Activated CD4-positive, alpha-beta T cell treated with anti-CD3 and anti-CD28 coated beads for 36 hours (primary cell): ENCODE measurements at regions of chr11 and their contacts with region 1.

Region 1: GRCh38 chr11:848380-848931 is 5.8 kb downstream of the TSPAN4 start:
- DNase-seq: peak; percentile 81
- ATAC-seq: peak; percentile 68
- H3K4me3 Mint-ChIP-seq: peak overlapping the region; percentile 62
- H3K27ac Mint-ChIP-seq: no peak overlapping the region
- H3K4me1 Mint-ChIP-seq: peaks cover 13% of the 10 kb centered on the region
- H3K27me3 Mint-ChIP-seq: peaks cover 2% of the 10 kb centered on the region

Region 2: DNA sequence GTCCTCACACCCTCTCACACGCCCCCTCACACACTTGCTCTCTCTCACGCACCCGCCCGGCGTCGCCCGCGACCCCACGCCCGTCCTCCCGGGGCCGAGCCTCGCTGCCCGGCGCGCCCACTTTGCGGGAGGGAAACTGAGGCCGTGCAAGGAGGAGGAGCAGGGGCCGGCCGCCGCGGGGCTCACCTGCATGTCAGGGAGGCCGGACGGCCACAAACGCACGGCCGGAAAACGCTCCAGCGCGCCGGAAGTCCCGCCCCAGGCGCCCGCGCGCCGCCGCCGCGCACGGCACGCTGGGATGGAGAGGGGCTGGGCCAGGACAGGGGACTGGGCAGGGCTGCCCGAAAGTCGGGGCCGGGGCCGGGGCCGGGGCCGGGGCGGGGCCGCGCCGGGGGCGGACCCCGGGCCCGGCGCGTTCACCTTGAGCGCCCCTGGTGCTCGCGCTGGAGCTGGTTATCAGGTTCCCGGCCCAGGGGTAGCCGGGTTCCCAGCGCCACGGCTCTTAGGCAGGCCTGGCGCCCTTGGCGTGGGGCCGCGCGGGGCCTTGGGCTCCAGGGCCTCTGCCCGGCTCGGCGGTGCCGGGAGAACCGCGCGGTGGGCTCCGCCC is 62.2 kb after region 1 on chr11 and contains the start of gene CHID1:
- CTCF ChIA-PET with region 1: no interaction called
- POLR2A ChIA-PET with region 1: no interaction called
- intact Hi-C with region 1: loop called (anchors 1 to 5 kb)
- DNase-seq: peak; percentile 92
- ATAC-seq: peak; percentile 98
- H3K4me3 Mint-ChIP-seq: peak within 1 kb of the TSS; percentile 88
- H3K27ac Mint-ChIP-seq: peak within 1 kb of the TSS; percentile 88
- H3K4me1 Mint-ChIP-seq: peaks cover 24% of the 10 kb centered on the region
- H3K27me3 Mint-ChIP-seq: no peaks in the 10 kb centered on the region
- total RNA-seq, gene CHID1: 60.4 to 75.3 TPM

Region 3: DNA sequence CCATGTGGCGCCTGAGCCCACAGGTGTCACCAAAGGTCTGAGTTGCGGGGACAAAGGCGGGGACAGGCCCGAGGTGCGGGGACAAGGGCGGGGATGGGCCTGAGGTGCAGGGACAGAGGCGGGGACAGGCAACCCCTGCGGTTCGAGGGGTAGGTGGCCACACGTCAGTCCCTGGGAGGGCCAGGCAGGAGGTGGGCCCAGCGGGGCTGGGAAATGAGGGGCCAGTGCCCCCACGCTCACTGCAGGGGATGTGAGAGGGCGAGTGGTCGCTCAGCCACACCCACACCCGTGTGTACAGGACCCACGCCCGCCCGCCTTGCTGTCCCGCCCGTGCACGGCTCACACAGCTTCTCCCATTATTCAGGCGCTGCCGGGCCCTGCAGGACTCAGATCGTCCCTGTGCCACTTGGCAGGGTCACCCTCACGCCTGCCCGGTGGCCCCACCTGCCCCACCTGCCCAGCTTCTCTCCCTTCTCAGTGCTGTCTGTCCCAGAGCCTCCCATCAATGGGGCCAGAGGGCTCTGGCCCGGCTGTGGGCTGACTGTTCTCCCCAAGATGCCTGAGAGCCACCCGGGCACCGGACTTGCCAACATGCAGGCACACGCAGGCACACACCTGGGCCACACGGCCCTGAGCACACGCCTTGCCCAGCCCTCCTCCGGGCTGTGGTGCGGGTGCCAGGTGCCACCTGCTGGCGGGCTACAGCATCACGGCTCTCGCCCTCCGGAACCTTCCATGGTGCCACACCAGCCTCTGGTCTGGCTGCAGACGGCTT is 202.3 kb after region 1 on chr11:
- CTCF ChIA-PET with region 1: interaction called, 4 read pairs
- POLR2A ChIA-PET with region 1: no interaction called
- intact Hi-C with region 1: loop called (anchors 1 kb)
- DNase-seq: peak; percentile 79
- ATAC-seq: peak; percentile 96
- H3K4me3 Mint-ChIP-seq: no peak overlapping the region
- H3K27ac Mint-ChIP-seq: no peak overlapping the region
- H3K4me1 Mint-ChIP-seq: no peaks in the 10 kb centered on the region
- H3K27me3 Mint-ChIP-seq: peaks cover 4% of the 10 kb centered on the region

Region 4: DNA sequence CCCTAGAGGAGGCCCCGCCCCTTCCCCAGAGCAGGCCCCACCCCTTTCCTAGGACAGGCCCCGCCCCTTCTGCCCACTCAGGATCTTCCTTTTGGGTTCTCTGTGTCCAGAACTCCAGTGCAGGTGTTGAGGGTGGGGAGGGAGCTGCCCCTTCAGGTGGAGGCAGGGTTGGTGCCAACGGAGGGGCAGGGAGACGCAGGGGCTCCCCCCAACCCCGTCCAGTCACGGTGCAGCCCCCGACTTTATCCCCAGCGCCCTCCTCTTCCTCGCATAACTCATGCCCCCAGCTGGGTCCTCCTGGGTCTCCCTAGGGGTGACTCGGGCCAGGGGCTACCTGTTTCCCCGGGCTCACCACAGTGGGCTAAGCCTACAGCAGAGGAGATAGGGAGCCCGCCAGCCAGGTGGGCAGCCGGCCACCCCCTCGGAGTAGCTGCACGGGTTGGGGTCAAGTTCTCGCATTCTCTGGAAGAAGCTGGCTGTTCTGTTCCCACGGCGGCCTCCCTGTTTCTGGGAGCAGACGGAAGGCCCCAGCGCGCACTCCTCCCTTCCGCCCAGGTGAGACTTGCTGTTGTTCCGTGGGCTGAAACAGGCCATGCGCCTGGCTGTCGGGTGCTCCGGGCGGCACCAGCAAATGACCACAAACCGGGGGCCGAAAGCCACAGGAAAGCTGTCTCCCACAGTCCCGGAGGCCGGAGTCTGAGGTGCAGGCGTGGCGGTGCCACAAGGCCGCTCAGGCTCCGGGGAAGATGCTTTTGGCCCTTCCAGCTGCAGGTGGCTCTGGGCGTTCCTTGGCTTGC is 265.1 kb after region 1 on chr11:
- CTCF ChIA-PET with region 1: no interaction called
- POLR2A ChIA-PET with region 1: no interaction called
- intact Hi-C with region 1: loop called in 1 of 2 experiments (anchors 5 kb)
- DNase-seq: peak; percentile 32
- ATAC-seq: peak; percentile 37
- H3K4me3 Mint-ChIP-seq: no peak overlapping the region
- H3K27ac Mint-ChIP-seq: no peak overlapping the region
- H3K4me1 Mint-ChIP-seq: no peaks in the 10 kb centered on the region
- H3K27me3 Mint-ChIP-seq: no peaks in the 10 kb centered on the region